ENCODE measurements at regions of chr2 and their contacts with region 1.

Region 1: DNA sequence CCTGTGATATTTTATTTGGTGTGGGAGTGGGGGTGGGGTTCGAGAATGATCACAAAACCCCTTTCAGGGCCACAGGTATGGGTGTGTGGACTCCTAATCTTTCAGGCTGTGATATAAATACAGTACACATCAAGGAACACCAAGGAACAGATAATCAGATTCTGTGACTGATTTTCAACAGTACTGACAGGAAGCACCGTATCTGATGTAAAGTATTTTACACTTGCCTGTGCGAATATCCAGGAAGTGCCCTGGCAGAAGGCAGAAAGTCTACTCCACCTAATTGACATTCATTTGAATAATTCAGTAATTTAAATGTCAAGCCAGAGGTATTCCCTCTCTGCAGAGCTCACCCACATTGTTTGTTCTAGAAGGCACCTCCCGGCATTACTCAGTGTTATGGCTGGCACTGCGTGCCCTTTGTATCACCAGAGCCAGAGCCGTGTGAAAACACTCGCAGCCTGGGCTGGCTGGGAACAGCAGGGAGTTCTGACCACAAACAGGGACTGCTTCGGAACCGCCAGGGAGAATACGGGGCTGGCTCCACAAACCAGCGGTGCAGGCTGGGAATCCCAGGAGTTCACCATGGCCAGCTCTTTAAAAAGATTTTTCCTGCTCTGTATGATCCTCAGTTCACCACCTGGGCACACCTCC is 91.8 kb downstream of the ACVR1 start:
- DNase-seq: peak in 2 of 4 donors; percentile 37 to 73
- ATAC-seq: peak; percentile 84
- H3K4me3 ChIP-seq: no peak overlapping the region
- H3K27ac ChIP-seq: peak overlapping the region; percentile 43 to 55
- H3K4me1 ChIP-seq: peaks cover 15 to 26% of the 10 kb centered on the region in 2 donors
- H3K27me3 ChIP-seq: no peaks in the 10 kb centered on the region
- CTCF ChIP-seq: no peak

Region 2: DNA sequence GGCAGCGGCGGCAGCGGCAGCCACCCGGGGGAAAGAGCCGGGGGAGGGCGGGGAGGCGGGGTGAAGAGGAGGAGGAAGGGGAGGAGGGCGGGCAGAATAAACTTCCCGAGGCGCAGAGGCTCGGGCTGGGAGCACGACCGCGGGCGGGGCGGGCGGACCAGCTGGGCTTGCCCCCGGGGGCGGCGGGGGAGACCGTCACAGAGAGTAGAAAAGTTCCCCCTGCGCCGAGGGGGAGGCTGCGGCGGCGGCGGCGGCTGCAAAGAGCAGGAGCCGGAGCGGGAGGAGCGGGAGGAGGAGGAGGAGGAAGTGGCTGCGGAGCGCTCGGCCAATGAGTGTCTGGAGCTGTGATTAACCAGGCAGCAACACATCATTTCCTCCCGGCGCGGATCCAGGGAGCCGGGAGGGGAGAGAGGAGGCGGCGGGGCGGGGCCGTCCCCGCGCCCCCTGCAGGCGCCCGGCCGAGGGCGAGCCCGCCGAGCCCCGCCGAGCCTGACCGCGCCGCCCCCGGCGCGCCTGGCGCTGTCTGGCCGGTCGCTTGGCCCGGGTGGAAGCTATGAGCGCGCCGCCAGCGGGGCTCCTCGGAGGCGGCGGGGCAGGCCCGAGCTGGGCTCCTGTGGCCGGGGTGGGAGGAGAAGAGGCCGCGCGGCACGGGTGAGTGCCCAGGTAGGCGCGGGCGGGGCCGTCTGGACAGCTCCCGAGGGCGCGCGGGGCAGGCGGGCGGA is 91.9 kb after region 1 on chr2 and contains the start of gene ACVR1:
- intact Hi-C with region 1: loop called in 1 of 2 experiments (anchors 10 kb)
- DNase-seq: peak; percentile 96 to 98 (median 96)
- ATAC-seq: peak; percentile 93
- H3K4me3 ChIP-seq: peak within 1 kb of the TSS; percentile 55 to 75
- H3K27ac ChIP-seq: peak within 1 kb of the TSS; percentile 95
- H3K4me1 ChIP-seq: peaks cover 14 to 27% of the 10 kb centered on the region in 2 donors
- H3K27me3 ChIP-seq: peaks cover 0 to 26% of the 10 kb centered on the region in 2 donors
- CTCF ChIP-seq: peak in 1 of 2 donors; percentile 24
- polyA plus RNA-seq, gene ACVR1: 27.3 to 33.1 (median 30.6) TPM

Region 3: DNA sequence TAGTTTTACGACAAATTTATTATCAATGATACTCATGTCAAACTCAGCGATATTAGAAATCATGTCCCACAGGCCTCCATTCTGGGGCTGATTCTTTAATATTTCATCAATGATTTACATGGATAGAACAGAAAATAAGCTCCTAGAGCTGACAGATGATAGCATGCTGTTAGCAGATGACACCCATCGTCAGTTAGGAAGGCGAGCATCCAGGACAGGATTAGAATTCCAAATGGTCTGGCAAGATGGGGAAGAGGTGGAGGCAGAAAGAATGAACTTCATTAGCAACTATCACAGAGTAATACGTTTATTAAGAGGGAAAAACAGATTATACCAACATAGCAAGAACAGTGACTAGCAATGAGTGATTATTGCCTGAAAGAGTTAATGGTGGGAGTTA is 138.0 kb after region 1 on chr2:
- intact Hi-C with region 1: no loop called
- DNase-seq: no peak
- ATAC-seq: no peak
- H3K4me3 ChIP-seq: no peak overlapping the region
- H3K27ac ChIP-seq: no peak overlapping the region
- H3K4me1 ChIP-seq: no peaks in the 10 kb centered on the region
- H3K27me3 ChIP-seq: no peaks in the 10 kb centered on the region
- CTCF ChIP-seq: no peak